Panc1 (cell line): ENCODE measurements at regions of chr3 and their contacts with region 1.

Region 1: GRCh38 chr3:120348981-120349818 is at the start of gene LRRC58:
- DNase-seq: peak; percentile 58
- ATAC-seq: peak; percentile 97
- H3K4me3 ChIP-seq: peak within 1 kb of the TSS; percentile 82 to 95
- H3K27ac ChIP-seq: peak within 1 kb of the TSS; percentile 94
- H3K4me1 ChIP-seq: peaks cover 30% of the 10 kb centered on the region
- H3K27me3 ChIP-seq: no peaks in the 10 kb centered on the region; the same call in 1 of the 2 replicates
- CTCF ChIP-seq: peak; percentile 68
- total RNA-seq, gene LRRC58: 29.5 TPM

Region 2: DNA sequence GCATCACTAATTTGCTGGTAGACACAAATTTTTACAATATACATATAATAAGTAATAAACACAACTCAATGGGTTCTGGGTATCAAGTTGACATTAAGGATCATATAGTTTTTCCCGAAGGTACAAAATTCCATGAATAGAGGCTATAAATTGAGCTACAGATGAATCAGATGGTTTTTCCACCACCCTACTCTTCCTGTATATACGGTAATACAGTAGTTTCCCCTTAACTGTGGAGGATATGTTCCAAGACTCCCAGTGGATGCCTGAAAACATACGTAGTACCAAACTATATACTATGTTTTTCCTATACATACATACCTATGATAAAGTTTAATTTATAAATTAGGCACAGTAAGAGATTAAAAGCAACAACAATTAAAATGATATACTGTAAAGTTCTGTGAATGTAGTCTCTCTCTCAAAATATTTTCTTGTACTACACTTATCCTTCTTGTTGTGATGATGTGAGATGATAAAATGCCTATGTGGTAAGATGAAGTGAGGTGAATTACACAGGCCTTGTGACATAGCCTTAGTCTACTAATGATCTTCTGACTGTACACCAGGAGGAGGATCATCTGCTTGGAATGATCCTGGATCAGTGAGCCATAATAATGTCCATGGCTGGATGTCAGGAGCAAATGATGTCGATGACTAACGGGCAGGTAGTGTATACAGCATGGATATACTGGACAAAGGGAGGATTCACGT is 450.6 kb before region 1 on chr3:
- CTCF ChIA-PET with region 1: interaction called, 11 read pairs
- POLR2A ChIA-PET with region 1: no interaction called
- in situ Hi-C with region 1: no loop called
- intact Hi-C with region 1: no loop called
- DNase-seq: no peak
- ATAC-seq: no peak
- H3K4me3 ChIP-seq: no peak overlapping the region
- H3K27ac ChIP-seq: no peak overlapping the region
- H3K4me1 ChIP-seq: no peaks in the 10 kb centered on the region
- H3K27me3 ChIP-seq: no peaks in the 10 kb centered on the region
- CTCF ChIP-seq: no peak

Region 3: DNA sequence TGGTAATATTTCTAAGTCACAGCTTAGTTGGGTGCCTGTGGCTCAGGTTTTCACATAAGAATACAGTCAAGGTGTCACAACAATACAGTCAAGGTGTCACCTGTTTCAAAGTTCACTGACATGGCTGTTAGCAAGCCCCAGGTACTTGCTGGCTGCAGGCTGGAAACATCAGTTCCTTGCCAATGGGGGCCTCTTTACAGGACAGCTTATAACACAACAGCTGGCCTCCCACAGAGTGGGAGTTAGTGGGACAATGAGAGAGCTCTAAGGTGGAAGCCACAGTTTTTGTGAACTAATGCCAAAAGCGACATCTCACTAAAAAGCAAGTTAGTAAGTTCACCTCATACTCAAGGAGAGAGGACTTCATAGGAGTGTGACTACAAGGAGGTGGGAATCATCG is 109.6 kb before region 1 on chr3:
- CTCF ChIA-PET with region 1: no interaction called
- POLR2A ChIA-PET with region 1: no interaction called
- in situ Hi-C with region 1: no loop called
- intact Hi-C with region 1: loop called (anchors 5 kb)
- DNase-seq: no peak
- ATAC-seq: no peak
- H3K4me3 ChIP-seq: no peak overlapping the region
- H3K27ac ChIP-seq: no peak overlapping the region
- H3K4me1 ChIP-seq: no peaks in the 10 kb centered on the region
- H3K27me3 ChIP-seq: peaks cover 8% of the 10 kb centered on the region
- CTCF ChIP-seq: no peak